A673 (cell line): ENCODE measurements at regions of chr7 and their contacts with region 1.

Region 1: GRCh38 chr7:7103343-7104313 is 78.7 kb upstream of the C1GALT1 start:
- DNase-seq: peak; percentile 74
- H3K4me3 ChIP-seq: no peak overlapping the region
- H3K27ac ChIP-seq: no peak overlapping the region
- H3K4me1 ChIP-seq: peaks cover 18% of the 10 kb centered on the region
- H3K27me3 ChIP-seq: no peaks in the 10 kb centered on the region
- CTCF ChIP-seq: peak; percentile 67

Region 2: GRCh38 chr7:7051206-7051877 is 52.3 kb before region 1 on chr7:
- CTCF ChIA-PET with region 1: no interaction called
- POLR2A ChIA-PET with region 1: no interaction called
- intact Hi-C with region 1: no loop called
- DNase-seq: no peak
- H3K4me3 ChIP-seq: no peak overlapping the region
- H3K27ac ChIP-seq: no peak overlapping the region
- H3K4me1 ChIP-seq: no peaks in the 10 kb centered on the region
- H3K27me3 ChIP-seq: no peaks in the 10 kb centered on the region
- CTCF ChIP-seq: no peak

Region 3: GRCh38 chr7:7157887-7158271 is 54.3 kb after region 1 on chr7:
- CTCF ChIA-PET with region 1: no interaction called
- POLR2A ChIA-PET with region 1: no interaction called
- intact Hi-C with region 1: no loop called
- DNase-seq: no peak
- H3K4me3 ChIP-seq: no peak overlapping the region
- H3K27ac ChIP-seq: no peak overlapping the region
- H3K4me1 ChIP-seq: no peaks in the 10 kb centered on the region
- H3K27me3 ChIP-seq: no peaks in the 10 kb centered on the region
- CTCF ChIP-seq: no peak

Region 4: DNA sequence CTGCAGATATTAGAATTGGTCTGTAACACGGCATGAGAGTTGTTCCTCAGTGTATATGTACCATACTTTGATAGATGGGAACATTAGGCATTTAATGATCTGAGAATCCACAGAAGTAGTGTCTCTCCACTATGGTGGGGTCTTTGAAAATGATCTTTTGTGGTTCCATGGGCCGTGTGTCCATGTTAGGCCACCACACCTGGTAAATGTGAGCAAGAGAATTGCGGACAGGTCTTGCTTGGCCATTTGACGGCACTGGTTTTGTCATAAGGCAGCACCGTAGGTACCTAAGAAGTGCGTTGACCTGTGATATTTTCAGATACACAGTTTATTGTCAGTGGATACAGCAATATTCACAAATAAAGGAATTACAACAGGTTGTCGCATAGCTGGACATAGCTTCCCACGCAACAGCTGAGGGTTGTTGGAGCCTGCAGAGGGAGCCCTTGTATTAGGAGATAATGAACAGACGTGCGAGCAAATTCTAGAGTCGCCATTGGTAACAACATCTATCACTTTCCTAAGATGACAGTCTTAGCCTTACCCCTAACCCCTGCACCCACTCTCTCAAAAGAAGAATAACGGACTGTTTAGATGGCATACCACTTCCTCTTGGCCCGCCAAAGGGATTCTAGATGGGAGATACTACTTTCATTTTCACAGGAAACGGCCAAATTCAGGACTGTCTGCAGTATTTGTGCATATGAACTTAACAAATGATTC is 320.7 kb after region 1 on chr7:
- CTCF ChIA-PET with region 1: no interaction called
- POLR2A ChIA-PET with region 1: no interaction called
- intact Hi-C with region 1: loop called (anchors 5 kb)
- DNase-seq: peak; percentile 76
- H3K4me3 ChIP-seq: peak overlapping the region; percentile 33
- H3K27ac ChIP-seq: no peak overlapping the region
- H3K4me1 ChIP-seq: no peaks in the 10 kb centered on the region
- H3K27me3 ChIP-seq: peaks cover 3% of the 10 kb centered on the region
- CTCF ChIP-seq: peak; percentile 86

Region 5: DNA sequence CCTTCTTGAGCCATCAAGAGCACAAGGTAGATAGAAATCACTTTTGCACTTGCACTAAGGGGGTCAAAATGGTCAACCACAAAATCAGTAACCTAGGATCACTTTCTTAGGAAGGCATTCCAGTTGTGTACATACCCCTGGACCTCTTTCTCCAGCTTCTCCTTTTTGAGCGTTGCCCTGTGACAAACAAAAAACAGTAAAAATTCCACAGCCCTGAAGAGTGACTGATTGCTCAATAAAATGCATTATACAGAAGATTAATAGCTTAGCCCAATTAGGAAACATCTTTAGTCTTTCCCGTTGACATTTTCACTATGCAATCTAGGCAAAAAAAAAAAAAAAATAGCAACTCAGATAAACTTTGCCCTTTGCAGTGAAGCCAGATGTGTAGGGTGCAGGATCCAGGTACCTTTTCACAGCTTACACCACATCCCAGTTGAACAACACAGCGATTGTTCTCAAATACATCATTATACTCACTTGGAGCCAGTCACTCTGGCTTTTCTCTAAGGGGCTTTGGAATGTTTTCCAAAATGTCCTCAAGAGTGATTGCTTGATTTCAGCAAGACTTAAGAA is 414.1 kb after region 1 on chr7:
- CTCF ChIA-PET with region 1: interaction called, 11 read pairs
- POLR2A ChIA-PET with region 1: no interaction called
- intact Hi-C with region 1: no loop called
- DNase-seq: no peak
- H3K4me3 ChIP-seq: no peak overlapping the region
- H3K27ac ChIP-seq: no peak overlapping the region
- H3K4me1 ChIP-seq: peaks cover 14% of the 10 kb centered on the region
- H3K27me3 ChIP-seq: no peaks in the 10 kb centered on the region
- CTCF ChIP-seq: no peak

Region 6: GRCh38 chr7:7539711-7540110 is 436.1 kb after region 1 on chr7:
- CTCF ChIA-PET with region 1: no interaction called
- POLR2A ChIA-PET with region 1: no interaction called
- intact Hi-C with region 1: loop called (anchors 2 kb)
- DNase-seq: no peak
- H3K4me3 ChIP-seq: no peak overlapping the region
- H3K27ac ChIP-seq: no peak overlapping the region
- H3K4me1 ChIP-seq: no peaks in the 10 kb centered on the region
- H3K27me3 ChIP-seq: no peaks in the 10 kb centered on the region
- CTCF ChIP-seq: no peak

Region 7: GRCh38 chr7:8295638-8296361 is 1192.2 kb after region 1 on chr7:
- CTCF ChIA-PET with region 1: no interaction called
- POLR2A ChIA-PET with region 1: no interaction called
- intact Hi-C with region 1: loop called (anchors 10 kb)
- DNase-seq: peak; percentile 87
- H3K4me3 ChIP-seq: no peak overlapping the region
- H3K27ac ChIP-seq: no peak overlapping the region
- H3K4me1 ChIP-seq: no peaks in the 10 kb centered on the region
- H3K27me3 ChIP-seq: peaks cover 46% of the 10 kb centered on the region
- CTCF ChIP-seq: peak; percentile 78